ENCODE measurements at regions of chr20 and their contacts with region 1.

Region 1: DNA sequence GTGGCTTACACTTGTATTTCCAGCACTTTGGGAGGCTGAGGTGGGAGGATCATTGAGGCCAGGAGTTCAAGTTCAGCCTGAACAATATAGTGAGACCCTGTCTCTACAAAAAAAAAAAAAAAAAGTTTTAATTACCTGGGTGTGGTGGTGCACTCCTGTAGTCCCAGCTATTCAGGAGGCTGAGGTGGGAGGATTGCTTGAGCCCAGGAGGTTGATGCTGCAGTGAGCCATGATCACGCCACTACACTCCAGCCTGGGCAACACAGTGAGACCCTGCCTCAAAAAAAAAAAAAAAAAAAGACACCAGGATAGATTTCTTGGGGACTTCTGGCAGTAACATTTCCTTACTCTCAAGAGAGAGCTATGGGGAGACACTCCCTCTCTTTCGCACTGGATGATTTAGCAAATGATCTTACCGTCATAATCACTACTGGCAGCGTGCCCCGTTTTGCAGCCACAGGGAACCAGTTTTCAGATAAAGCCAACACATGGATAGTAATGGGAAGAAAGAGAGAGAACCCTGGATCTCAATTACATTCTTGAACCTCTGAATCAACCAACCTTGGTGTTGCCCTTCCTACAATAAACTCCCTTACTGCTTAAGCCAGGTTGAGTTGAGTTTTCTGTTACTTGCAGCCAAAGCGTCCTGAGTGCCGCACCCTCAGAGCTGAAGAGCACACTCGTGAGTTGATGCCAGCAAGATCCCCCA is 18.1 kb upstream of the PTPN1 start:
- DNase-seq: no peak
- CTCF ChIP-seq: no peak

Region 2: DNA sequence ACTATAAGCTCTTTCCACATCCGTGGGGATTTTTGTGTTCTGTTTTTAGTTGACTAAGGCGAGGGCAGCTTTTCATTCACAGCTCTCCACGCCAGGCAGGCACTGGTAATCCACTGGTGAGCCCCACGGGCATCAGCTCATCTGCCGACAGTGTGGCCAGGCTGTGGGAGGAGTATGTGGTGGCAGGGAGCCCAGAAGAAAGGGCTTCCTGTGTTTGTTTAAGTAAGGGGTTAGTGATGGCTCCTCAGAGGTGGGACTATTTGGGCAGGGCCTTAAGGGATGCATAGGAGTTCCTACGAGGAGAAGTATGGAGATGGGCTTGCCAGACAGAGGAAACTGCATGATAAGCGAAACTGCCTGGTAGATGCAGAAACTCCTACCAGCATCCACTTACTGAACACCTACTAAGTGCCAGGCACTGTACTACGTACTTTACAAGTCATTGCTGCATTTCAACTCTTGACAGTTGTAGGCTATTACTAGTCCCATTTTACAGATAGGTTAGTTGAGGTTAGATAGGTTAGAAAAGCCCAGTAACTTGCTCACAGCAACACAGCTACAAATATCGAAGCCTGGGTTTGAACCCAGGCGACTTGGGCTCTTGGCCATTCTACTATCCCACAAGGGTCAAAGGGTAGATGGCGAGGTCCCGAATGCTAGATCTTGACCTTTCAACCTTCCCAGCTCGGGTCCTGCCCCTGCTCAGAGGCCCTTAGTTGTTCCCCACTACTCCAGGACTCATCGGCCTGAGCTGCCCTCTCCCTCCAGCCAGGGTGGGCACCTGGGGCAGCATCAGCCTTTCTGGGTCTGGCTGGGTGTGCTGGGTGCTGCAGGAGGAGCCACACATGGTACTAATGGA is 246.4 kb before region 1 on chr20:
- CTCF ChIA-PET with region 1: no interaction called
- POLR2A ChIA-PET with region 1: no interaction called
- DNase-seq: no peak
- CTCF ChIP-seq: no peak

Region 3: DNA sequence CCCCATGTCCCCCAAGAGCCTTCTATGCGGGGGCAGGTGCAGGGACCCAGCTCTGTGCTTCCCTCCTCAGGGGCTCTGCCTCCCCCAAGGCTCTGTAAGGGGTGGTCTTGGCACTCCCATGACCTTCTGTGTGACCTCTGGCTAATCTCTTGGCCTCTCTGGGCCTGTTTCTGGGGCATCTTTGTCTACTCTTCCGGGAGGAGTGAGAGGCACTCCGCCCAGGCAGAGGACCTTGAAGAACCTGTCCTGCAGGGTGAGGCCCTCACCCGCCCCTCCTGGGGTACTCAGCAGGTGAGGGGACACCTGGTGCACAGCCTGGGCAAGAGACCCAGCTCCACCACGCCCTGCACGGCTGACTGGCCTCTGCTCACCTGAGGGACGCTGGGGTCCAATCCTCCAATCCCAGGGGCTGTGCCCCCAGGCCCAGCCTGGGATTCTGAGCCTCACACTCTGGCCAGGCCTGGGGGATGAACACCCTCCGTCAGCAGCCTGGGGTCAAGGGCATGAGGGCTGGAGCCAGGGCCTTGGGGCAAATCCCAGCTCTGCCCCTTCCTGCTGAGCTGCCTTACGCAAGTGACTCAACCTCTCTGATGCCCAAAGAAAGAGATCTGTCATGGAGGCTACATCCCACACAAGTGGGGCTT is 131.9 kb before region 1 on chr20:
- CTCF ChIA-PET with region 1: no interaction called
- POLR2A ChIA-PET with region 1: no interaction called
- DNase-seq: no peak
- CTCF ChIP-seq: no peak

Region 4: GRCh38 chr20:50478162-50479036 is 13.7 kb before region 1 on chr20:
- CTCF ChIA-PET with region 1: interaction called, 18 read pairs
- POLR2A ChIA-PET with region 1: no interaction called
- DNase-seq: peak; percentile 70
- CTCF ChIP-seq: peak; percentile 55

Measured in GM10248 (cell line).